Psoas muscle (tissue), 8 donors: ENCODE measurements at regions of chr22 and their contacts with region 1.

Region 1: GRCh38 chr22:42820066-42820763 is 36.9 kb downstream of the ARFGAP3 start:
- DNase-seq: no peak
- ATAC-seq: peak in 3 of 4 donors; percentile 37 to 73 (median 47)
- H3K4me3 ChIP-seq: no peak overlapping the region
- H3K27ac ChIP-seq: no peak overlapping the region
- H3K4me1 ChIP-seq: peaks cover 16% of the 10 kb centered on the region
- H3K27me3 ChIP-seq: no peaks in the 10 kb centered on the region
- CTCF ChIP-seq: peak; percentile 75

Region 2: GRCh38 chr22:42621505-42622002 is 198.7 kb before region 1 on chr22:
- intact Hi-C with region 1: loop called in 1 of 2 experiments (anchors 1 kb)
- DNase-seq: peak; percentile 78 to 90
- ATAC-seq: peak; percentile 78 to 84 (median 81)
- H3K4me3 ChIP-seq: no peak overlapping the region
- H3K27ac ChIP-seq: peak overlapping the region; percentile 64
- H3K4me1 ChIP-seq: peaks cover 14% of the 10 kb centered on the region
- H3K27me3 ChIP-seq: no peaks in the 10 kb centered on the region
- CTCF ChIP-seq: peak; percentile 93

Region 3: DNA sequence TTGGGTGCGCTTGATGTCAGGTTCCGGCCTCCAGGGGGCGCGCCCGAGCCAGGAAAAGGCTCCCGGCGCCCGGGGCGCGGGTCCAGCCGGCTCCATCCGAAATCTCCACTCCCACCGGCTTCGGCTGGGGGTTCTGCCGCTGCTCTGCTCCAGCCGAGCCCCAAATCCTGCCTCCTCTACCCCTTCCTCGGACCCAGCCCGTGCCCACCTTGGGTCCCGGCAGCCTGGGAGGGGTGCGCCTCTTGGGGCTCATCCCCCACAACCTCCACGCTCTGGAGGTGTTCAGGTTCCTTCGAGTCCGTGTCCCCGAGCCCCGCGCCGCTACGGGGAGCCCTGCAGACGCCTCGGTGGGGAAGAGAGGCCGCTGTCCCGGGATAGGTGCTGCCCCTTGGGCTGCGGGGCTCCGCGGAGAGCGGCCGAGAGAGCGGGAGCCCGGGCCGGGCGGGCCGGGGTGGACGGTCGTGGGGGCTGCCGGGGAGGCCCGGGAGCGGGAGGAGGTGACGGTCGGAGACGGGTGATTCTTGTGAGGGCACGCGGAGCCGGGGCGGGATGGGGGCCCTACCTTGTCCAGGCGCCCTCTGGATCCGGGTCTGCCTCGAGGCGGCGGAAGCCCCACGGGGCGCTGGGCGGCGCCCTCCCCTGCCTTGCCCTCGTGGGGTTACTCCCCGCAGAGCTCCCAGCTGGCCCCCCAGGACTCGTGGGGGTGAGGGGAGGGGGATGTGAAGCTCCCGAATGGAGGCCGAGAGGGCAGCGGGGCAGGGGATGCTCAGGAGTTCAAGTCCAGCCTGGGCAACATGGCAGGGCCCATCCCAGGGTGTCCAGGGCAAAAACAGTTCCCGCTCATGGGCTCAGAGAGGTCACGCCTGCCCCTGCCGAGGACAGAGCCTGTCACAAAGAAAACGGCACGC is 157.8 kb before region 1 on chr22:
- intact Hi-C with region 1: loop called (anchors 1 to 5 kb)
- DNase-seq: peak; percentile 89 to 93
- ATAC-seq: peak; percentile 88 to 97 (median 90)
- H3K4me3 ChIP-seq: peak overlapping the region; percentile 72
- H3K27ac ChIP-seq: peak overlapping the region; percentile 46
- H3K4me1 ChIP-seq: peaks cover 5% of the 10 kb centered on the region
- H3K27me3 ChIP-seq: no peaks in the 10 kb centered on the region
- CTCF ChIP-seq: peak; percentile 88

Region 4: DNA sequence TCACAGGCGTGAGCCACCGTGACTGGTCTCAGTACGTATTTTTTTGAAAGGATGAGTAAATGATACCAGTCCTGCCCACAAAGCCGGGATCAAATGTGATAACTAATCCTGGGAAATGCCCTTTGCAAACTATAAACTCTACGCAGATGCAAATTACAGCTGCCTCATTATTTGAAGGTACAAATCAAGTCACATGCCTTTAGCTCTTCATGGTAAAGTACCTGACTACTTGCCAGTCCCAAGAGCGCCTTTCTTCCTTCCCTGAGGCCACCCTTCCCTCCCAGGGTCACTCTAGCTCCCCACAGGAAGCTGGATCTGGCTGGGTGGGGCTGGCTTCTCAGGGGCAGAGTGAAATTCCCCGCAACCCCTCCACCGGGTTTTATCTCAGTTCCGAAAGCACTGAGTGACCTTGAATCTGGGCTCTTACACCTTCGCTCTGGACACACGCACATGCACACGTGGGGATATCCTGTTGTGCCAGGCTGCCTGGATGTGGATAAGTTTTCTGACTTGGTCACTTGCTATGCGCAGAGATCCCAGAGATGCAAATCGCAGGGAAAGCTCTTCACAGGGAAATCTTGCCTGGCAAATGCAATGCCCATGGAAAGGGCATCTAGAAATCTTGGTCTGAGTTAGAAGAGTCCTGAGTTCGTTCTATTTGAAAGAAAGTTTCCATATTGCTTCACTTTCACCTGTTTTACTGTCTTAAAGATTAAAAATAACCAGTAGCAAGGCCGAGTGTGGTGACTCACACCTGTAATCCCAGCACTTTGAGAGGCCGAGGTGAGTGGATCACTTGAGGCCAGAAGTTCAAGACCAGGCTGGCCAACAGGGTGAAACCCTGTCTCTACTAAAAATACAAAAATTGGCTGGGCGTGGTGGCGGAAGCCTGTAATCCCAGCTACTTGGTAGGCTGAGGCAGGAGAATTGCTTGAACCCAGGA is 108.0 kb before region 1 on chr22:
- intact Hi-C with region 1: loop called in 1 of 2 experiments (anchors 5 kb)
- DNase-seq: no peak
- ATAC-seq: peak in 3 of 4 donors; percentile 46 to 64 (median 61)
- H3K4me3 ChIP-seq: no peak overlapping the region
- H3K27ac ChIP-seq: peak overlapping the region; percentile 50
- H3K4me1 ChIP-seq: peaks cover 4% of the 10 kb centered on the region
- H3K27me3 ChIP-seq: no peaks in the 10 kb centered on the region
- CTCF ChIP-seq: no peak

Region 5: GRCh38 chr22:42780070-42780540 is 40.1 kb before region 1 on chr22:
- intact Hi-C with region 1: loop called (anchors 2 to 5 kb)
- DNase-seq: no peak
- ATAC-seq: peak; percentile 80 to 97 (median 90)
- H3K4me3 ChIP-seq: no peak overlapping the region
- H3K27ac ChIP-seq: no peak overlapping the region
- H3K4me1 ChIP-seq: no peaks in the 10 kb centered on the region
- H3K27me3 ChIP-seq: no peaks in the 10 kb centered on the region
- CTCF ChIP-seq: peak; percentile 86